Cardiac septum (tissue), 1 donor: ENCODE measurements at regions of chr9 and their contacts with region 1.

Region 1: DNA sequence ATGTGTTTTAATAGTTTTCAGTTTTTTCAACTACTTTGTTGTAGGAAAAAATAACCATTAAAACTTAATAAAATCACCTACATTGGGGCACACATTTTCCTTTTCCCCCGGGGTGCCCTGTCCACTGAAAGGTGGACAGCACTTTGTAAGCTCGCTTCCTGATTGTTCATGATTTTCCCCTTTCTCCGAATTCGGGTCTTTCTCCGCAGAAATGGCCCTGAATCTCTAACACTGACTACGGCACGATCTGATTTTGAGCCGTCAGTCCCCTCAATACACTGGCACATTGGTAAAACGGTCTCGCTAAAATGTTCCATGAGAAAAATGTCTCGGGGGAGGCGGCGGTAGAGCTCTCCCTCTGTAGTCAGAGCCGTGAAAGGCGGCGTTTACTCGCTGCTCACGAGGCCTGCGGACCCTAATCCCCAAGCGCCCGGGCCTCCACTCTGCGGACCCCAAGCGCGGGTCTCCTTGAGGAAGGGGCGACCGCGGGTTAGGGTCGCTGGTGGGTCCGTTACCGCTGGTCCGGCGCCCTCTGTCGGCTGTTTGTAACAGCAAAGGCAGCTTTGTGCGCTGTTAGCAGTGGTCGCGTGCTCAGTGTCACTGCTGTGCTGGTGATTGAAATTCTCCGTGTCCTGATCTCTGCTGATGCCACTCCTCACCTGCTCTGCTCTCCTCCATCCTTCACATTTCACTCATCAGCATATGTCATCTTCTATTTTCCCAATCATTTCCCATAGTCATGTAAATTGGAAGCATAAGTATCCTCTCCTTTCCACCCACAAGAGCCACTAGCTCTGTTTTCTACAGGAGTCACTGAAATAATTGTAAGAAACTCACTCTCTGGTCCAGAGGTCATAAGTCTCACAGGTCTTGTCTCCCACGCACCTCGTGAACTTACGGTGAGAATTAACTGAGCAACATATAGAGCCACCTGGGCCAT is 10.8 kb upstream of the IFNA2 start:
- DNase-seq: no peak

Region 2: GRCh38 chr9:21324047-21324446 is 72.0 kb before region 1 on chr9:
- intact Hi-C with region 1: loop called (anchors 5 kb)
- DNase-seq: no peak